ENCODE measurements at regions of chr18 and their contacts with region 1.

Region 1: DNA sequence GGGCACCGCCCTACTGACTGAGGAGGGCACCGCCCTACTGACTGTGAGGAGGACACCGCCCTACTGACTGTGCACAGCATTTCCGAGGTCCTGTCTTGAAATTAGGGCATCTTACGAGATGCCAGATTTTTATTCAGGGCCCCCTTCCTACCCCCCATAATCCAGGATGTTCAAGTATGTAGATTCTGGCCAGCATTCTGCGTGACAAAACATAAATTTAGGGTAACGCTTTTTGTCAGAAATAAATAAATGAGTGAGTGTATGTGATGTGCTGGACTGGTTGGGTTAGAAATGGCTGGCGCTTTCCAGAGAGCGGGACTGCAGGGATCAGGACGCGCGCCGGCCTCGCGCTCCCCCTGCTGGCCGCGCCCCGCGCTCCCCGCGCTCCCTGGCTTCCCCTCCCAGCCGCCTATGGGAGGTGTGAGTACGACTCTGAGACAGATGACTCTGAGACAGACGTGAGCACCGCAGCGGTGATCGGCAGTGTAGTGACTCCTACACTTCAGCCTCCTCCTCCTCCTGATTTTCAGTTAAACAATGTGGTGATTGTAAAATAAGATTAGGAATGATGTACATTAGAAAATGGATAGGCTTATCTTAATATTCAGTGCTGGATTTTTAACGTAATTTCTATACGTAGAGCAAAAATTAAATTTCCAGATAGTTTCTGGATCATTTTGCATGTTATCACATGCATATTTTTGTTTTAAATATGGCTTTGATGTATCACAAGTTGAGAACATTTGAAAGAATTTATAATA is 149.2 kb upstream of the NFATC1 start:
- DNase-seq: peak; percentile 61
- ATAC-seq: peak; percentile 87
- H3K4me3 Mint-ChIP-seq: peak overlapping the region; percentile 36
- H3K27ac Mint-ChIP-seq: peak overlapping the region; percentile 78
- H3K4me1 Mint-ChIP-seq: peaks cover 17% of the 10 kb centered on the region
- H3K27me3 Mint-ChIP-seq: no peaks in the 10 kb centered on the region
- CTCF ChIP-seq: peak; percentile 47

Region 2: DNA sequence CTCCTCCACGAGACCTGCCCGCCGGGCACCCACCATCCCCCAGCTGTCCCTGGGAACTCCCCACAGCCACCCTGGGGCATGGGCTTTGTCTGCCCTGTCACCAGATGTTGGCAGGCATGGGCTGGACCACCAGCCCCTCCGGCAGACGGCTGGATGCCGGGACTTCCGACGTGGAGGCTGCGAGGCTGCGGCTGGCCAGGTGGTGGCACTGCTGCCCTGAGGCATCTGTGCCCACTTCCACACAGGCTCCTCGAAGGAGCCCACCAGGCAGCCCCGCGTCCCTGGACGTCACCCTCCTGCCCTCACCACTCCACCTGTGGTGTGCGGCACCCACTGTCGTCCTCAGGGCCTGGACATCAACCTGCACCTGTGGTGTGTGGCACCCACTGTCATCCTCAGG is 586.8 kb before region 1 on chr18:
- CTCF ChIA-PET with region 1: no interaction called
- POLR2A ChIA-PET with region 1: no interaction called
- intact Hi-C with region 1: loop called (anchors 10 kb)
- DNase-seq: no peak
- ATAC-seq: no peak
- H3K4me3 Mint-ChIP-seq: no peak overlapping the region
- H3K27ac Mint-ChIP-seq: no peak overlapping the region
- H3K4me1 Mint-ChIP-seq: no peaks in the 10 kb centered on the region
- H3K27me3 Mint-ChIP-seq: no peaks in the 10 kb centered on the region
- CTCF ChIP-seq: no peak

Region 3: GRCh38 chr18:79068937-79069791 is 177.4 kb before region 1 on chr18 and contains the start of gene ATP9B:
- CTCF ChIA-PET with region 1: no interaction called
- POLR2A ChIA-PET with region 1: no interaction called
- intact Hi-C with region 1: loop called (anchors 2 kb)
- DNase-seq: peak; percentile 99
- ATAC-seq: peak; percentile 84
- H3K4me3 Mint-ChIP-seq: peak within 1 kb of the TSS; percentile 88
- H3K27ac Mint-ChIP-seq: peak within 1 kb of the TSS; percentile 95
- H3K4me1 Mint-ChIP-seq: peaks cover 30% of the 10 kb centered on the region
- H3K27me3 Mint-ChIP-seq: peaks cover 3% of the 10 kb centered on the region
- CTCF ChIP-seq: no peak
- total RNA-seq, gene ATP9B: 41.5 and 49.2 TPM in 2 replicates

Region 4: GRCh38 chr18:79975985-79976680 is 729.6 kb after region 1 on chr18:
- CTCF ChIA-PET with region 1: no interaction called
- POLR2A ChIA-PET with region 1: no interaction called
- intact Hi-C with region 1: no loop called
- DNase-seq: no peak
- ATAC-seq: no peak
- H3K4me3 Mint-ChIP-seq: no peak overlapping the region
- H3K27ac Mint-ChIP-seq: no peak overlapping the region
- H3K4me1 Mint-ChIP-seq: peaks cover 10% of the 10 kb centered on the region
- H3K27me3 Mint-ChIP-seq: no peaks in the 10 kb centered on the region
- CTCF ChIP-seq: no peak